BJ (cell line): ENCODE measurements at regions of chr11 and their contacts with region 1.

Region 1: DNA sequence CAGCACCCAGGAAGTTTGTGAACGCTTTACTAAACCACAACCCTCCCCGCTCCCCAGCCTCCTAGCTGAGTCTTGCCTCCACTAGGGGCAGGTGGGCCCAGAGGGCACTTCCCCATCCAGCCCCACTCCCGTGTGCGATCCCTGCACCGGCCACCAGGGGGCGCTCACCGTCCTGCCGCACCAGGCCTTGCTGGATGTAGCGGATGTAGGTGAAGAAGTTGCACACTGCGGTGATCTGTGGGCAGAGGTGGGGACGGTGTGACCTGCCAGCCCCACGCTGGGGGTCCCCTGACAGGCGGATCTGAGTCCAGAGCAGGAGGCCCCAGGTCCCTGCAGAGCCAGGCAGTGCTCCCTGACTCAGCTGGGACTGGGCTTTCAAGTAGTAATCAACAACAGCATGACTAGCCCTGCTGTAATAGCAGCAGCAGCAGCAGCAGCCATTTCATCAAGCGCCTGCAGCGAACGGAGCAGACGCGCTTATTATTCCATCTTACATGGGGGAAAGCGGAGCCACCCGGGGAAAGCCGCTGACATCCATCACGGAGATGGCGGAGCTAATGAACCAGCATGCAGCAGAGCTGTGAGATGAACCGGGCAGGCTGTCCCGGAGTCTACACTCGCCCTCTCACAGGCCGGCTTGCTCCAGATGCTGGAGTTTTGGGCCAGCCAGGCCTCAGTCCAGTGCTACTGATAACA is 7.9 kb upstream of the FADS3 start:
- DNase-seq: no peak
- H3K4me3 ChIP-seq: no peak overlapping the region
- H3K27me3 ChIP-seq: no peaks in the 10 kb centered on the region
- CTCF ChIP-seq: peak; percentile 100

Region 2: DNA sequence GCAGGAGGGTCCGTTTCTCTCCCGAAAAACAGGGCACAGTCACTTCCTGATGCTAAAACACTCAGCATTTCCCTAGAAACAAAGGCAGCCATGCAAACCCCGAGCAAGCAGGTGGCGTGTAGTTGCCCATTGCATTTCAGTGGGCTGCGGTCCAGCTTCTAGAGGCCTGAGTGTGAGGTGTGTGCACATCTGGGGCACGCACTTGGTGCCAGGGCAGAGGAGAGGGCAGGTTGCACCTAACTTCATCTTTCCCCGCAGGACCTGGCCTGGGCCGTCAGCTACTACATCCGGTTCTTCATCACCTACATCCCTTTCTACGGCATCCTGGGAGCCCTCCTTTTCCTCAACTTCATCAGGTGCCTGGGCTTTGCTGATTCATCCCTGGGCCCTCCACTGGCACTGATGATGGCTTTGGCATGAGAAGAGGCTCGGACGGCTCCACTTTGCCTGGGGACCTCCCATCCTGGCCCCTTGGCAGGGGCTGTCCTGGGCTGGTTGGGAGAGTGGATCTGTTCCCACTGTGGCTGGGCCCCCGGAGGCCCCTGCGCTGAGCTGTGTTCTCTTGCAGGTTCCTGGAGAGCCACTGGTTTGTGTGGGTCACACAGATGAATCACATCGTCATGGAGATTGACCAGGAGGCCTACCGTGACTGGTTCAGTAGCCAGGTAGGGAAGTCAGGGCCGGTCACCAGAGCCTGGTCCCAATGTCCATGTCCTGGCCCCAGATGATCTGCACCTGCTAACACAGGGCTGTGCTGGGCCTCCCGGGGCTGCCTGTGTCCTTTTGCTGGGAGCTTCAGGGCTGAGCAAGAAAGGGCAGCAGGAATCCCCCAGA is 36.4 kb before region 1 on chr11:
- CTCF ChIA-PET with region 1: interaction called, 12 read pairs
- POLR2A ChIA-PET with region 1: no interaction called
- DNase-seq: no peak
- H3K4me3 ChIP-seq: no peak overlapping the region
- H3K27me3 ChIP-seq: no peaks in the 10 kb centered on the region
- CTCF ChIP-seq: no peak

Region 3: GRCh38 chr11:61888043-61888442 is 11.3 kb before region 1 on chr11:
- CTCF ChIA-PET with region 1: interaction called, 49 read pairs
- POLR2A ChIA-PET with region 1: no interaction called
- DNase-seq: peak; percentile 72
- H3K4me3 ChIP-seq: no peak overlapping the region
- H3K27me3 ChIP-seq: no peaks in the 10 kb centered on the region
- CTCF ChIP-seq: no peak

Region 4: GRCh38 chr11:61923166-61924063 is 24.1 kb after region 1 on chr11:
- CTCF ChIA-PET with region 1: interaction called, 34 read pairs
- POLR2A ChIA-PET with region 1: no interaction called
- DNase-seq: peak; percentile 69
- H3K4me3 ChIP-seq: no peak overlapping the region
- H3K27me3 ChIP-seq: no peaks in the 10 kb centered on the region
- CTCF ChIP-seq: no peak

Region 5: DNA sequence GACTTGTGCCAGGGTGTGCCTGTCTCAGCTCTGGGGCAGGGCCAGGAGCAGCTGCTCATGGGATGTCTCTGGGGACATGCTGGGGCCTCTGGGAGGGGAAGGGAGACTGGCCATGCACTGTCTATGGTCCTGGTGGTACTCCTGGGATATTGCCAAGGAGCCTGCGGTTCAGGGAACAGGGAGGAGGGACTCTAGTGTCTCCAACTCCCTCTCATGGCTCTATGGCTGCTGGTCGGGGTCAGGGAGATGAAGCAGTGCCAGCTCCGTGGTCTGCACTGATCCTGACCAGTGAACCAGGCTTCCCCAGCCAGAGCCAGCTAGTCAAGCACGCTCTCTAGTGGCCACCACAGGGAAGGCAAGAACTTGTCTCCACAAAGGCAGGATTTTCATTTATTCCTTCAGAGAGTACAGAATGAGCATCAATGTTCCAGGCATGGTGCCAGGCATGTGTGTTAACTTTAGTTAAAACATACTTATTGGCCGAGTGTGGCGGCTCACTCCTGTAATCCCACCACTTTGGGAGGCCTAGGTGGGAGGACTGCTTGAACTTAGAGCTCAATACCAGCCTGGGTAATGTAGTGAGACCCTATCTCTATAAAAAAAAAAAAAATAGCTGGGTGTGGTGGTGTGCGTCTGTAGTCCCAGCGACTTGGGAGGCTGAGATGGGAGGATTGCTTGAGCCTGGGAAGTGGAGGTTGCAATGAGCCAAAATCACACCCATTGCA is 48.4 kb after region 1 on chr11:
- CTCF ChIA-PET with region 1: interaction called, 374 read pairs
- POLR2A ChIA-PET with region 1: no interaction called
- DNase-seq: no peak
- H3K4me3 ChIP-seq: no peak overlapping the region
- H3K27me3 ChIP-seq: peaks cover 2% of the 10 kb centered on the region
- CTCF ChIP-seq: peak; percentile 98

Region 6: GRCh38 chr11:61967116-61967923 is 68.0 kb after region 1 on chr11 and contains the start of gene FTH1:
- CTCF ChIA-PET with region 1: interaction called, 21 read pairs
- POLR2A ChIA-PET with region 1: no interaction called
- DNase-seq: peak; percentile 51
- H3K4me3 ChIP-seq: peak within 1 kb of the TSS; percentile 83
- H3K27me3 ChIP-seq: no peaks in the 10 kb centered on the region
- CTCF ChIP-seq: no peak
- polyA plus RNA-seq, gene FTH1: 1,472 and 1,806 TPM in 2 replicates

Region 7: GRCh38 chr11:62108017-62108750 is 208.9 kb after region 1 on chr11:
- CTCF ChIA-PET with region 1: interaction called, 84 read pairs
- POLR2A ChIA-PET with region 1: no interaction called
- DNase-seq: no peak
- H3K4me3 ChIP-seq: no peak overlapping the region
- H3K27me3 ChIP-seq: no peaks in the 10 kb centered on the region
- CTCF ChIP-seq: peak; percentile 72